Endothelial cell of umbilical vein (primary cell): ENCODE measurements at regions of chr19 and their contacts with region 1.

Region 1: DNA sequence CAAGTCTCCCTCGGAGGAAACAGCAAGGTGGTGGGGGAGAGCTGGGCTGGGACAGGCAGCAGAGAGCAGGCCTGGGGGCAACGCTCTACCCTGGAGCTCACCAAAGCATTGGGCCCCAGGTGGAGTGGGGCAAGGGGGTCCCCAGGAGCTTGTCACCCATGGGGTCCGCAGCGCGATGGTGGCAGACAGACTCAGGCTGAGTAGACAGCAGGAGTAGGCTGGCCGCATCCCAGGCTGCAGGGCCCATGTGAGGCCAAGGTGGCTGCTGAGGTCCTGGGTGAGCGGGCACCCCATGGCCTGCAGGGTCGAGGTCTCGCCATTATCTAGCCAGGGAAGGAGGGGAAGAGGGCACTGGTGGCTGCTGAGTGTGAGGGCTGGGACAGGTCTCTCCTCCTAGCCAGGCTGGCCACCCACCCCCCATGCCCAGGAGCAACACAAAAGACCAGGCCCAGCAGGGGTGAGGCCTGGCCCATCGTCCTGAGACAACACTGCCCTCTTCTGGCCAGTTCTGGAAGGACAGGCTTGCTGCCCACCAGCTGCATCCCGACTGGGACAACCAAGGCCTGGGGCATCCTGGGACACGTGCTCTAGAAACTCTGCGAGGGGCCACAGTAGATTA is 33.1 kb downstream of the CEBPG start:
- DNase-seq: peak; percentile 57
- H3K4me3 ChIP-seq: no peak overlapping the region
- H3K27ac ChIP-seq: no peak overlapping the region
- H3K4me1 ChIP-seq: no peaks in the 10 kb centered on the region
- H3K27me3 ChIP-seq: no peaks in the 10 kb centered on the region
- CTCF ChIP-seq: peak; percentile 85 to 89
- POLR2A ChIP-seq: no peak

Region 2: DNA sequence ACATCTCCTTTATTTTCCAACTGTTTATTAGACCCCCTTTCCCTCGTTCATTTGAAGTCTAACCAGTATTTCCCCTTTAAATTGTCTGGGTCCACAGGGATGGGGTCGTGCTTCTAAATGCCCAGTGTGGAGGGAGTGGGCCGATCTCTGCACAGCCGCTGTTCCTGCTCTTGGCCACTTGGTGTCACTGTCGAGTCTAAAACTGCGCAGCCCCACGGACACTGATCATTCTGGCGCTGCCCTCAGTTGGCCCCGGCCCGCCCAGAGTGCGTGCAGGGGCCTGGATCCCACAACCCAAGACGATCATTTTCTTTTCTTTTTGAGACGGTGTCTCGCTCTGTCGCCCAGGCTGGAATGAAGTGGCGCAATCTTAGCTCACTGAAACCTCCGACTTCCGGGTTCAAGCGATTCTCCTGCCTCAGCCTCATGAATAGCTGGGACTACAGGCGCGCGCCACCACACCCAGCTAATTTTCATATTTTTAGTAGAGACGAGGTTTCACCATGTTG is 262.7 kb before region 1 on chr19:
- CTCF ChIA-PET with region 1: interaction called, 3 read pairs
- POLR2A ChIA-PET with region 1: no interaction called
- dilution Hi-C with region 1: no loop called
- intact Hi-C with region 1: loop called (anchors 2 kb)
- DNase-seq: peak; percentile 60
- H3K4me3 ChIP-seq: no peak overlapping the region
- H3K27ac ChIP-seq: no peak overlapping the region
- H3K4me1 ChIP-seq: no peaks in the 10 kb centered on the region
- H3K27me3 ChIP-seq: no peaks in the 10 kb centered on the region
- CTCF ChIP-seq: peak; percentile 89 to 95
- POLR2A ChIP-seq: no peak

Region 3: GRCh38 chr19:33241530-33242101 is 165.0 kb before region 1 on chr19:
- CTCF ChIA-PET with region 1: interaction called, 181 read pairs
- POLR2A ChIA-PET with region 1: no interaction called
- dilution Hi-C with region 1: no loop called
- intact Hi-C with region 1: loop called (anchors 1 kb)
- DNase-seq: peak; percentile 7
- H3K4me3 ChIP-seq: no peak overlapping the region
- H3K27ac ChIP-seq: no peak overlapping the region
- H3K4me1 ChIP-seq: no peaks in the 10 kb centered on the region
- H3K27me3 ChIP-seq: no peaks in the 10 kb centered on the region
- CTCF ChIP-seq: peak; percentile 18 to 56
- POLR2A ChIP-seq: no peak

Region 4: GRCh38 chr19:33394006-33394849 is 12.4 kb before region 1 on chr19:
- CTCF ChIA-PET with region 1: interaction called, 11 read pairs
- POLR2A ChIA-PET with region 1: no interaction called
- dilution Hi-C with region 1: no loop called
- intact Hi-C with region 1: no loop called
- DNase-seq: no peak
- H3K4me3 ChIP-seq: no peak overlapping the region
- H3K27ac ChIP-seq: no peak overlapping the region
- H3K4me1 ChIP-seq: peaks cover 19% of the 10 kb centered on the region
- H3K27me3 ChIP-seq: no peaks in the 10 kb centered on the region
- CTCF ChIP-seq: no peak
- POLR2A ChIP-seq: no peak